ENCODE measurements at regions of chr22 and their contacts with region 1.

Region 1: DNA sequence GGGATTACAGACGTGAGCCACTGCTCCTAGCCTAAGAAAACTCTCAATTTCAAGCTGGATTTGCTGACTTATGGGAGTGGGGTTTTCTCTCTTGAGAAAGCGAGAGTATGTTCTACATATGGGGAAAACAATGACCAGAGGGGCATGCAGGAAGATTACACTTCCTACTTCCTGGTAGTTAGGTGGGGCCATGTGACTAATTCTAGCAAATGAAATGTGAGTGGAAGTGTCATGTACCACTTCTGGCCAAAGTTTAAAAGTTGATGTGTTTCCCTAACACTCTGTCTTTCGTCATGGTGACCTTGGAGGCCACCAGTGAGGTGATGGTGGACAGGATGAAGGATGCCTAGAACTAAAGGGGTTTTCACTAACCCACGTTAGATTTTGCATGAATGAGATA is 50.5 kb downstream of the PARVG start:
- DNase-seq: no peak
- H3K4me3 ChIP-seq: no peak overlapping the region
- H3K27ac ChIP-seq: no peak overlapping the region
- H3K4me1 ChIP-seq: no peaks in the 10 kb centered on the region
- H3K27me3 ChIP-seq: no peaks in the 10 kb centered on the region
- CTCF ChIP-seq: no peak

Region 2: DNA sequence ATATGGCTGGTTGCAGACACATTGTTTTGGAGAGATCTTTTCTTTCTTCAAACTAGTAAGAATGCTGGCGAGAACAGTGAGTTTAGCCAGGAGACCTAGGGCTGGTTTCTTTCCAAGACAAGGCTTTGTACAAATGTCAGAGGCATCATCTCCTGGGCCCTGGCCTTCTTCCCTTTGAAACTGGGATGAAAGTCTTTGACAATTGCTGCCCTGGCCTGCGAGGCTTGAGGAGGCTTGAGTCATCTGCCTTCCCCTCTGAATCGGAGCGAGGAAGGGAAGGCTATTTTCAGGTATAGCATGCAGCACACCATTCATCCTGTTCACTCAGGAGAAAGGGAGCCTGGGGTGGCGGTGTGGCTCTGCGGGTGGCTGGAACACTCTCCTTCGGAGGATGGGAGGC is 72.0 kb before region 1 on chr22:
- CTCF ChIA-PET with region 1: no interaction called
- dilution Hi-C with region 1: loop called (anchors 5 kb)
- in situ Hi-C with region 1: no loop called
- intact Hi-C with region 1: no loop called
- DNase-seq: no peak
- H3K4me3 ChIP-seq: no peak overlapping the region
- H3K27ac ChIP-seq: no peak overlapping the region
- H3K4me1 ChIP-seq: no peaks in the 10 kb centered on the region
- H3K27me3 ChIP-seq: no peaks in the 10 kb centered on the region
- CTCF ChIP-seq: no peak

Region 3: DNA sequence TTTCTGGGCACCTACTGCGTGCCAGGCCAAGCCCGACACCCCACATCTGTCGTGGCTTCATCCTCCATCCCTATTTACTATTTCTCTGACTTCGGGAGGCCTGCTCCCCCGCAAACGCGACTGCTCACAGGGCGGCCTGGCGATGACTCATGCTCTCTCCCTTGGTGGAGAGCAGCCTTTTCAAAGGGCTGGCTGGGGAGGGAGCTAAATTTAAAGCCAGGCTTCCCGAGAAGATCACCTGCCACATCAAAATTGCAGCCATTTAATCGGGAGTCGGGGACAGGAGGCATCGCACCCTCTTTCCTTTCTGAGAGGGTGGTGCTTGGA is 106.4 kb after region 1 on chr22:
- CTCF ChIA-PET with region 1: no interaction called
- dilution Hi-C with region 1: no loop called
- in situ Hi-C with region 1: no loop called
- intact Hi-C with region 1: no loop called
- DNase-seq: peak; percentile 52
- H3K4me3 ChIP-seq: no peak overlapping the region
- H3K27ac ChIP-seq: no peak overlapping the region
- H3K4me1 ChIP-seq: peaks cover 14% of the 10 kb centered on the region
- H3K27me3 ChIP-seq: no peaks in the 10 kb centered on the region
- CTCF ChIP-seq: no peak